Caco-2 (cell line): ENCODE measurements at regions of chr9 and their contacts with region 1.

Region 1: DNA sequence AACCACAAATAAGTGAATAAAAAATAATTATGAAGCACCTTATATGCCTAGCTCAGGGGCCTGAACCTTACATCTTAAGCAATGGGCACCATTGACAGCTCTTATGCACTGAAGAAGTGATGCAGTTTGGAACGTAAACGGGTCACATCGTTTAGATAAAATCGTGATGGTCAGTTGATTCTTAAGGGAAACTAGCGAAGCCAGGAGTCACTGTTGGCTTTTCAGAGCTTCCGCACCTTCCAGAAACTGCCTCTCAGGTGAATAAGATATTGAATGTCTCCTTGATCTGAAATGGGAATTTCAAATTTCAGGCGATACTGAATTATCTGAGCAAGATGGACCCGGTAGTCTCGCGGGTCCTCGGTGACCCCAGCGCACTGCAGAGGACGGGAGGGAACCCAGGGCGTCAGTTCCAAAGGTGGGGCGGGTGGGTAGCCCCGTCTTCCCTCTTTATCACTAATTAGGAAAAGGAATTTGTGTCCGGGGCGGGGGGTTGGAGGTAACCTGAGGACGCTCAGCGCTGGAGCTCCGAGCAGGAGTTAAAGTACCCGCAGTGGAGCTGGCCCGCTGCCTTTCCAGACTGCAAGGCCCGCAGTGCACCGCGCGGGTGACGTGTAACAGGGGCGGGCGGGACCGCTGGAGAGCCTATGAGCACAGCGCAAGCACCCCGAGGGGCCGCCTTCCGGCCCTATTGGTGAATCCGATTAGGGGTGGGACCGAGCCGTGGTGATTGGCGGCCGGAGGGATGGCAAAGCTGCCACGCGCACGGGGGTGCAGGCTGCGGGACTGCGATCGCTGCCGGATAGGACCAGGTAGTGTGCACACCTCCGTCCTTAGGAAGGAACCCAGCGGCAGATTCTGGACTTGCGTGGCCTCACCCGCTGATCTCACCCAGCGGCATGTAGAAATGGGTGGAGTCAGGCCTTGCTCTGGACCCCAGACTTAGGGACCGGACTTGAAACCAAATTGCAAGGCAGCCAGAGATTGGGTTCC is 19.7 kb upstream of the GARNL3 start:
- DNase-seq: peak; percentile 97
- H3K4me3 ChIP-seq: peak overlapping the region; percentile 45
- H3K4me3 Mint-ChIP-seq: peak overlapping the region; percentile 88
- H3K27ac Mint-ChIP-seq: peak overlapping the region; percentile 89
- H3K4me1 ChIP-seq: peaks cover 5% of the 10 kb centered on the region; the same call in 1 of the 2 replicates
- H3K4me1 Mint-ChIP-seq: peaks cover 6% of the 10 kb centered on the region
- H3K27me3 ChIP-seq: no peaks in the 10 kb centered on the region
- H3K27me3 Mint-ChIP-seq: no peaks in the 10 kb centered on the region
- CTCF ChIP-seq: no peak

Region 2: GRCh38 chr9:127388037-127388855 is 143.3 kb after region 1 on chr9:
- CTCF ChIA-PET with region 1: no interaction called
- POLR2A ChIA-PET with region 1: interaction called, 11 read pairs
- intact Hi-C with region 1: no loop called
- DNase-seq: peak; percentile 91 to 95
- H3K4me3 ChIP-seq: no peak overlapping the region
- H3K4me3 Mint-ChIP-seq: peak overlapping the region; percentile 61
- H3K27ac Mint-ChIP-seq: peak overlapping the region; percentile 97
- H3K4me1 ChIP-seq: peaks cover 67% of the 10 kb centered on the region
- H3K4me1 Mint-ChIP-seq: peaks cover 73% of the 10 kb centered on the region
- H3K27me3 ChIP-seq: no peaks in the 10 kb centered on the region
- H3K27me3 Mint-ChIP-seq: no peaks in the 10 kb centered on the region
- CTCF ChIP-seq: no peak